ENCODE measurements at regions of chr5 and their contacts with region 1.

Region 1: DNA sequence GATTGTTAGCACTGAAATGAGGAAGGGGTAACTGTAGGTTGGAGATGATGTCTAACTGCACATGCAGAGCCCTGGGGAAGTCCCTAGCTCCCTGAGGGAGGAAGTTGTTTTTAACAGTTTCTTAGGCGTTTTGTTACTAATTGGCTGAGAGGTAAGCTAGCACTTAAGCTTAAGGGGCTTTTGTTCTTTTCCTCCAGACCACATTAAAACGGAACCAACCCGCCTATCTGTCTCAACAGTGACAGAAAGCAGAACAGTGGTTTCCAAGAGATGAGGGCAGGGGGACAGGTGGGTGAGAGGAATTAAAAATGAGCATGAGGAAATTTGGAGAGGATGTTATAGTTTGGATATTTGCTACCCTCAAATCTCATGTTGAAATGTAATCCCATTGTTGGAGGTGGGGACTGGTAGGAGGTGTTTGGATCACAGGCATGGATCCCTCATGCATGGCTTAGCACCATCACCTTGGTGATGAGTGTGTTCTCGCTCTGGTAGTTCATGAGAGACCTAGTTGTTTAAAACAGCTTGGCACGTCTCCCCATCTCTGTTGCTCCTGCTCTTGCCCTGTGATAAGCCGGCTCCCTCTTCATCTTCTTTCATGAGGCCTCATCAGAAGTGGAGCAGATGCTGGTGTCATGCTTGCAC is 38.9 kb downstream of the LYRM7 start:
- DNase-seq: peak; percentile 94
- ATAC-seq: peak; percentile 77
- H3K4me3 ChIP-seq: peak overlapping the region; percentile 84
- H3K27ac ChIP-seq: peak overlapping the region; percentile 94
- H3K4me1 ChIP-seq: peaks cover 14% of the 10 kb centered on the region; the same call in 1 of the 2 replicates
- H3K27me3 ChIP-seq: no peaks in the 10 kb centered on the region
- CTCF ChIP-seq: no peak
- EP300 ChIP-seq: peak; percentile 82 to 88; a peak in 3 of 4 replicates
- POLR2A ChIP-seq: peak; percentile 71
- RAD21 ChIP-seq: peak; percentile 5; the same call in 1 of the 2 replicates

Region 2: GRCh38 chr5:130455175-130455574 is 754.5 kb before region 1 on chr5:
- CTCF ChIA-PET with region 1: no interaction called
- POLR2A ChIA-PET with region 1: no interaction called
- RAD21 ChIA-PET with region 1: no interaction called
- SMC1A ChIA-PET with region 1: no interaction called
- in situ Hi-C with region 1: no loop called
- intact Hi-C with region 1: no loop called
- DNase-seq: no peak
- ATAC-seq: no peak
- H3K4me3 ChIP-seq: no peak overlapping the region
- H3K27ac ChIP-seq: no peak overlapping the region
- H3K4me1 ChIP-seq: no peaks in the 10 kb centered on the region
- H3K27me3 ChIP-seq: no peaks in the 10 kb centered on the region
- CTCF ChIP-seq: no peak
- EP300 ChIP-seq: no peak
- POLR2A ChIP-seq: no peak
- RAD21 ChIP-seq: no peak

Region 3: GRCh38 chr5:131170540-131171275 is 38.9 kb before region 1 on chr5 and contains the start of gene LYRM7:
- CTCF ChIA-PET with region 1: interaction called, 5 read pairs
- POLR2A ChIA-PET with region 1: interaction called, 6 read pairs
- RAD21 ChIA-PET with region 1: interaction called, 9 read pairs
- SMC1A ChIA-PET with region 1: interaction called, 6 read pairs
- in situ Hi-C with region 1: no loop called
- intact Hi-C with region 1: loop called (anchors 1 kb)
- DNase-seq: peak; percentile 98
- ATAC-seq: peak; percentile 98
- H3K4me3 ChIP-seq: peak within 1 kb of the TSS; percentile 86
- H3K27ac ChIP-seq: peak within 1 kb of the TSS; percentile 65
- H3K4me1 ChIP-seq: peaks cover 3% of the 10 kb centered on the region
- H3K27me3 ChIP-seq: no peaks in the 10 kb centered on the region
- CTCF ChIP-seq: no peak
- EP300 ChIP-seq: no peak
- POLR2A ChIP-seq: peak; percentile 82
- RAD21 ChIP-seq: 0 out of 2 replicates have a peak, but pooled peaks have one; percentile 4
- polyA plus RNA-seq, gene LYRM7: 25.8 to 45.7 TPM

Region 4: GRCh38 chr5:131252824-131253171 is 43.2 kb after region 1 on chr5:
- CTCF ChIA-PET with region 1: interaction called, 6 read pairs
- POLR2A ChIA-PET with region 1: interaction called, 63 read pairs
- RAD21 ChIA-PET with region 1: interaction called, 56 read pairs
- SMC1A ChIA-PET with region 1: interaction called, 1,218 read pairs
- in situ Hi-C with region 1: no loop called
- intact Hi-C with region 1: no loop called
- DNase-seq: peak; percentile 81
- ATAC-seq: peak; percentile 79
- H3K4me3 ChIP-seq: peak overlapping the region; percentile 38; the same call in 1 of the 2 replicates
- H3K27ac ChIP-seq: peak overlapping the region; percentile 80
- H3K4me1 ChIP-seq: peaks cover 46% of the 10 kb centered on the region
- H3K27me3 ChIP-seq: no peaks in the 10 kb centered on the region
- CTCF ChIP-seq: no peak
- EP300 ChIP-seq: 0 out of 4 replicates have a peak, but pooled peaks of 1 of the 2 experiments have one; percentile 30
- POLR2A ChIP-seq: peak; percentile 72
- RAD21 ChIP-seq: 0 out of 2 replicates have a peak, but pooled peaks have one; percentile 14

Region 5: DNA sequence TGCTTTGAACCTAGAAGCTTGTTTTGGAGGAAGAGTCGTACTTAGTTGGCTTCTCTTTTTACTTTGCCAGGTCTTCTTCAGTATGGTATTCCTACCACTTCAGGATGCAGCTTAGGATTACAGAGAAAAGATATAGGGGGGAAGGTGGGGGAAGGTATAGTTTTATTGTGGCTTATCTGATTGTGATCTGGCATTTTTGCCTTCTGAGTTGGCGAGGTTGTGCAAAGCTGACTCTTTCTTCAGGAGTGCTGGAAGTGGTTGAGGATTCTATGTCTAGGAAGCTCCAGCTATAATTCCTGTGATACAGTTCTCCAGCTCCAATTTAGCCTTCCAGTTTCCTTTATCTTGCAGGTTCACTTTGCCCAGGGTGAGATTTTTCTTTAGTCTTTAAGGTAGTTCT is 61.2 kb after region 1 on chr5:
- CTCF ChIA-PET with region 1: interaction called, 36 read pairs
- POLR2A ChIA-PET with region 1: interaction called, 309 read pairs
- RAD21 ChIA-PET with region 1: interaction called, 302 read pairs
- SMC1A ChIA-PET with region 1: interaction called, 1,218 read pairs
- in situ Hi-C with region 1: no loop called
- intact Hi-C with region 1: no loop called
- DNase-seq: no peak
- ATAC-seq: no peak
- H3K4me3 ChIP-seq: peak overlapping the region; percentile 70
- H3K27ac ChIP-seq: peak overlapping the region; percentile 71
- H3K4me1 ChIP-seq: peaks cover 31% of the 10 kb centered on the region
- H3K27me3 ChIP-seq: no peaks in the 10 kb centered on the region
- CTCF ChIP-seq: no peak
- EP300 ChIP-seq: no peak
- POLR2A ChIP-seq: no peak
- RAD21 ChIP-seq: no peak

Measured in GM12878 (cell line).